CD8-positive, alpha-beta memory T cell (primary cell): ENCODE measurements at regions of chr20 and their contacts with region 1.

Region 1: GRCh38 chr20:17431621-17432364 is 99.4 kb downstream of the BFSP1 start:
- DNase-seq: peak in 4 of 5 donors; percentile 6 to 31 (median 24)
- H3K4me3 ChIP-seq: no peak overlapping the region
- H3K4me3 Mint-ChIP-seq: no peak overlapping the region
- H3K27ac ChIP-seq: no peak overlapping the region
- H3K27ac Mint-ChIP-seq: no peak overlapping the region
- H3K4me1 ChIP-seq: no peaks in the 10 kb centered on the region
- H3K4me1 Mint-ChIP-seq: peaks cover 0 to 6% (median 0%) of the 10 kb centered on the region in 3 donors
- H3K27me3 ChIP-seq: peaks cover 5% of the 10 kb centered on the region
- H3K27me3 Mint-ChIP-seq: peaks cover 9 to 39% of the 10 kb centered on the region in 2 donors

Region 2: DNA sequence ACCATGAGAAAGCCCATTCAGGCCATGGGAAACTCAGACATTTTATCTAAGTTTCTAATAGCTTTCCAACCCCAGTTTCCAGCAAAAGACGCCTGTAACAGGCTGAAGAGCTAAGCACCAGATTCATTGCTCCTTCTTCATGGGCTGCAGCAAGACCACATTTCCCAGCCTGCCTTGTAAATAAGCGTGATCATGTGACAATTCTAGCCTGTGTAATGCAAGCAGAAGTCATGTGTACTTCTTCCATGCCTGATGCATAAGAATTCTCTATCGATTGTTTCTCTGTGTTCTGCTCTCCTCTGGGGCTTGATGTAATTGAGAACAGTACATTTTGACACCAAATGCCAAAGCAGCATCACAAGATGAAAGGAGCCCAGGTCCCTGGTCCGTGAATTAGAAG is 198.2 kb before region 1 on chr20:
- CTCF ChIA-PET with region 1: no interaction called
- POLR2A ChIA-PET with region 1: no interaction called
- DNase-seq: no peak
- H3K4me3 ChIP-seq: no peak overlapping the region
- H3K4me3 Mint-ChIP-seq: no peak overlapping the region
- H3K27ac ChIP-seq: no peak overlapping the region
- H3K27ac Mint-ChIP-seq: no peak overlapping the region
- H3K4me1 ChIP-seq: no peaks in the 10 kb centered on the region
- H3K4me1 Mint-ChIP-seq: no peaks in the 10 kb centered on the region
- H3K27me3 ChIP-seq: no peaks in the 10 kb centered on the region
- H3K27me3 Mint-ChIP-seq: peaks cover 4 to 8% of the 10 kb centered on the region in 2 donors

Region 3: GRCh38 chr20:17421493-17421892 is 10.3 kb before region 1 on chr20:
- CTCF ChIA-PET with region 1: interaction called, 14 read pairs
- POLR2A ChIA-PET with region 1: no interaction called
- DNase-seq: no peak
- H3K4me3 ChIP-seq: no peak overlapping the region
- H3K4me3 Mint-ChIP-seq: no peak overlapping the region
- H3K27ac ChIP-seq: no peak overlapping the region
- H3K27ac Mint-ChIP-seq: peak overlapping the region in 1 of 8 donors; percentile 51
- H3K4me1 ChIP-seq: no peaks in the 10 kb centered on the region
- H3K4me1 Mint-ChIP-seq: no peaks in the 10 kb centered on the region
- H3K27me3 ChIP-seq: peaks cover 4% of the 10 kb centered on the region
- H3K27me3 Mint-ChIP-seq: peaks cover 7 to 12% of the 10 kb centered on the region in 2 donors

Region 4: GRCh38 chr20:17453592-17453991 is 21.8 kb after region 1 on chr20:
- CTCF ChIA-PET with region 1: interaction called, 11 read pairs
- POLR2A ChIA-PET with region 1: no interaction called
- DNase-seq: no peak
- H3K4me3 ChIP-seq: no peak overlapping the region
- H3K4me3 Mint-ChIP-seq: no peak overlapping the region
- H3K27ac ChIP-seq: no peak overlapping the region
- H3K27ac Mint-ChIP-seq: no peak overlapping the region
- H3K4me1 ChIP-seq: no peaks in the 10 kb centered on the region
- H3K4me1 Mint-ChIP-seq: no peaks in the 10 kb centered on the region
- H3K27me3 ChIP-seq: no peaks in the 10 kb centered on the region
- H3K27me3 Mint-ChIP-seq: peaks cover 8 to 55% of the 10 kb centered on the region in 2 donors

Region 5: GRCh38 chr20:17542993-17543412 is 111.2 kb after region 1 on chr20:
- CTCF ChIA-PET with region 1: no interaction called
- POLR2A ChIA-PET with region 1: no interaction called
- DNase-seq: no peak
- H3K4me3 ChIP-seq: no peak overlapping the region
- H3K4me3 Mint-ChIP-seq: no peak overlapping the region
- H3K27ac ChIP-seq: no peak overlapping the region
- H3K27ac Mint-ChIP-seq: no peak overlapping the region
- H3K4me1 ChIP-seq: no peaks in the 10 kb centered on the region
- H3K4me1 Mint-ChIP-seq: no peaks in the 10 kb centered on the region
- H3K27me3 ChIP-seq: no peaks in the 10 kb centered on the region
- H3K27me3 Mint-ChIP-seq: peaks cover 12 to 48% of the 10 kb centered on the region in 2 donors

Region 6: DNA sequence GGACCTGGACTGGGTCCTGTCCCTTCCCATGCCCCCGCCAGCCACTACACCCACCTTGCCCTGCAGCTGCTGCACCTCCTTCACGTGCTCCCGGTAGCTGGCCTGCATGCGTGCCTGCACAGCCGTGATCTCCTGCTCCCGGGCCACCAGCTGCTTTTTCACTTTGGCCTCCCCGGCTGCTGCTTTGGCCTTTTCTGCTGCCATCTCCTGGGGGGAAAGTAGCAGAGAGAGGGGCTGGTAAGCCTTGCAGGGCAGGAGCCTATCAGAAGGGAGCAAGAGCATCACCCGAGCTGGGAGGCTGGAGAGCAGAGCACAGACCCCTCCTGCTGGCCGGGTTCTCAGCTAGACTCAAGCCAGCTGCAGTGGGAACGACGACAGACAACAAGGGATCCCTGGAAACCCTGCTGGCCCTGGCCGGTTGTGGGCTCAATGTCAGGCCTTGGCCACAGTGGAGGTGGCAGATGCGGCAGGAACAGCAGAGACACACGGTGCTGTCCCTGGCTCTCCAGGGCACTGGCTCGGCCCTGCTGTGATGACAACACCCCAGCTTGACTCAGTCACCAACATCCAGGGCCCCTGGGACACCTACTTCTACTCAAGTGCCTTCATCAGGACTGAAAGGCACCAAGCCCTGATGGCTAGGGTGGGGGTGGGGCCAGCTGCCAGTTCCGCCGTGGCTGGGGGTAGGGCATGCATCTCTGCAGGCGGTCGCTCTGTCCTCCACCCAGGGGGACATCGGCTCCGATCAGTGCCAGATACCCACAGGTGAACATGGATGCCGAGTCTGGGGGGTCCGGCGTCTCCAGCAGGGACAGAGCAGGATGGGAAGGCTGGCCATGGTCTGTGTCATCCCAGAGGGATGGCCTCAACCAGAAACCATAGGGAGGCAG is 205.0 kb after region 1 on chr20:
- CTCF ChIA-PET with region 1: no interaction called
- POLR2A ChIA-PET with region 1: no interaction called
- DNase-seq: no peak
- H3K4me3 ChIP-seq: no peak overlapping the region
- H3K4me3 Mint-ChIP-seq: no peak overlapping the region
- H3K27ac ChIP-seq: no peak overlapping the region
- H3K27ac Mint-ChIP-seq: peak overlapping the region in 1 of 8 donors; percentile 84
- H3K4me1 ChIP-seq: no peaks in the 10 kb centered on the region
- H3K4me1 Mint-ChIP-seq: no peaks in the 10 kb centered on the region
- H3K27me3 ChIP-seq: no peaks in the 10 kb centered on the region
- H3K27me3 Mint-ChIP-seq: no peaks in the 10 kb centered on the region